ENCODE measurements at regions of chr11 and their contacts with region 1.

Region 1: DNA sequence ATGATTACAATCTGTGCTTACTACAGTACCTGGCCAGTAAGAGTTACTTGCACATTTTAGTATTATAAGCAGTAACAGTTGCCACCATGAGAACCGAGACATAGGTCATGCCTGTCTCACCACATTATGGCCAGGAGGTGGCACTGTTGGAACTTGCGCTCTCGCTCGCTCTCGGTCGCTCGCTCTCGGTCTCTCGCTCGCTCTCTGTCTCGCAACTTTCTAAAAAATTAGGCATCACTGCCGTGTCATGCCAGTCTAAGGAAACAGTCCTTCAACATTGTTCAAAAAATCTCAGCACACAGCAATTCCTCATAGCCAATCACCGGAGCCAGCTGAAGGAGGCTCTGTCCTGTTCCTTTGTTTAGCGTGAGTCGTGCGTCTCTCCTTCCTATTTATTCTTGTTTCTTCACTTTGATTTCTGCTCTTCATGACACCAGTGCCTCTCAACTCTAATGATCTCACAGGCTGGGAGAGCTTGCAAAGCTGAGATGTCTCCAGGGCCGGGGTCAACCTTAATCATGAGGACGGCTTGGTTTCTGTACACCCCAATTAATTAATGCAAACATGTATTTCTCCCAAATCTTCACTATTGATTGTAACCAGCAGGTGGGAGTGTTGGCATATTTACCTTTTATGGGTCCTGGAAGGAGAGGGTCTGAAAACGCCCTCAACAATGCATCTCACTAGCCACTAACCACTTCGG is 6.3 kb upstream of the ADAMTS8 start:
- H3K4me3 ChIP-seq: peak overlapping the region; percentile 38
- H3K27ac ChIP-seq: no peak overlapping the region
- H3K4me1 ChIP-seq: no peaks in the 10 kb centered on the region
- CTCF ChIP-seq: peak; percentile 76

Region 2: DNA sequence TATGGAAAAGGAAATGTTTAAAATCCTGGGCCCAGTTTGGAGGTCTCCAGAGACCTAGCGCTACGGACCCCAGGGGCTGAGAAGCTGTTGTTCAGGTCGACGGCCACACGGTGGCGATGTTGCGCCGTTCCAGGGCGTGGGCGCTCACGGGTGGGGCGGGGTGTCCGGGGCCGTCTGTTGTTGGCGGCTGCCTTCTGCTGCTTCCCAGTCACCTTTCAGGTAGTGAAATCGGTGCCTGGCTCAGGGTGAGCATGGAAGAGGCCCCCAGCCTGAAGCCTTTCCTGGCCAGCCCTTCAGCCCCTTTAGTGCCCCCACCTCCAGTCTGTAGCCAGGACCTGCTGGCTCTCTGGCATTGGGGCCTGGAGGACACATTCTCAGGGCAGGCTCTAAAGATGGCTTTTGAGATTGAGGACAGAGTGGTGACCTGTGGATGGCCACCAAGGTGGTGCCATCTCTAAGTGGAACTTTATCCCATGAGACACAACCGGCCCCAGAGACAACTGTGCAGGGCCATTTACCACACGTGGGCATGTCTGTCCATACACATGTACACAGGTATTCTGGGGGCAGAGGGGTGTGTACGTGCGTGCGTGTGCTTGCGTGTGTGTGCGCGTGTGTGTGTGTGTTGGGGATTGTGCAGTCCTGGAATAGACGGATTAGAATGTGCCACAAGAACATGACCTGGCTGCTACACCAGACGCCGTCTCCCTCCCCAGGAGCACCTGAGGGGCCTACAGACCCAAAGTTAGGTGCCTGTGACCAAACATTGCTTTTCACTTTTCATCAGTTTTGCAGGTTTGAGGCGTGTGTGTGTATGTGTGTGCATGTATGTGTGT is 221.3 kb before region 1 on chr11:
- CTCF ChIA-PET with region 1: interaction called, 68 read pairs
- POLR2A ChIA-PET with region 1: interaction called, 3 read pairs
- H3K4me3 ChIP-seq: no peak overlapping the region
- H3K27ac ChIP-seq: no peak overlapping the region
- H3K4me1 ChIP-seq: no peaks in the 10 kb centered on the region
- CTCF ChIP-seq: peak; percentile 67

Region 3: GRCh38 chr11:130390071-130390758 is 44.5 kb before region 1 on chr11:
- CTCF ChIA-PET with region 1: interaction called, 20 read pairs
- POLR2A ChIA-PET with region 1: no interaction called
- H3K4me3 ChIP-seq: no peak overlapping the region
- H3K27ac ChIP-seq: no peak overlapping the region
- H3K4me1 ChIP-seq: no peaks in the 10 kb centered on the region
- CTCF ChIP-seq: peak; percentile 28; the same call in 1 of the 2 replicates

Region 4: DNA sequence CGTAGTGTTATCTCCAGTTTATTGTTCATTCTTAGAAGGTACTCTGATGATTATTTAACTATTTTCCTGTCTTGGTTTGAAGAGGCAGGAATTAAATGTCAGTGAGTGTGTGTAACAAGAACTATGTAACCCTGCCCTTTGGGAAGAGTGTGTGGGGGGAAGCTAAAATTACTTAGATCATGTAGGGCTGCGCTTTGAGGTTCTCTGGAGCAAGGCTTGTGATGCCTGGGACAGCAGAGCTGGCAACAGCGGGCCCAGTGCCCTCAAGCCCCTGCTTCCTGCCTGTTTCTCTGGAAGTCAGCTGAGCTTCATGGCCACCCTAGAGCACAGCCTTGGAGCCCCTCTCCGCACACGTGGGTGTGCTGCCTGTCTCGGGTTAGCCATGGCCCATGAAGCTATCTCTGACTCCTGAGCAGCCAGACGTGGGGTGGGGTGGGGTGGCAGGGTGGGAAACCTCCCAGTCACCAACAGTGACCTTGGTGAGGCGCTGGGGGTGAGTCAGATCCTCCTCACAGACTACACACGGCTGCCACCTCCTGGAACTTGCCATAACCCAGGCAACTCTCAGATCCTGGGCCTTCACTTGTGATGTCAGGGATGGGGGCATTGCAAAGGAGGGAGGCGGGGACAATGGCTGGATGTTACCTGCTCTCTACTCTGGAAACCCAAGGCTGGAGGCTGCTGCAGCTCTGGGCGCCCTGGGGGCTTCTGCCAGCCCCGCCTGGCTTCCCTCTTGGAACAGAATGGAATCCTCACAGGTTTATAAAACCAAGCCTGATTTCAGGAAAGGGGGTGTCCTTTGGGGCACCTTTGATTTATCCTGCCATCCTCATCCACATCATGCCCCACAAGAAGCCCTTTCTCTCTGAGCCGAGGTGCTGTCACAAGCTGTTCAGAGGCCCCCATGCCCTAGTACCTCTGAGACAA is 393.0 kb after region 1 on chr11:
- CTCF ChIA-PET with region 1: interaction called, 29 read pairs
- POLR2A ChIA-PET with region 1: no interaction called
- H3K4me3 ChIP-seq: no peak overlapping the region
- H3K27ac ChIP-seq: no peak overlapping the region
- H3K4me1 ChIP-seq: no peaks in the 10 kb centered on the region
- CTCF ChIP-seq: peak; percentile 42; the same call in 1 of the 2 replicates

Region 5: DNA sequence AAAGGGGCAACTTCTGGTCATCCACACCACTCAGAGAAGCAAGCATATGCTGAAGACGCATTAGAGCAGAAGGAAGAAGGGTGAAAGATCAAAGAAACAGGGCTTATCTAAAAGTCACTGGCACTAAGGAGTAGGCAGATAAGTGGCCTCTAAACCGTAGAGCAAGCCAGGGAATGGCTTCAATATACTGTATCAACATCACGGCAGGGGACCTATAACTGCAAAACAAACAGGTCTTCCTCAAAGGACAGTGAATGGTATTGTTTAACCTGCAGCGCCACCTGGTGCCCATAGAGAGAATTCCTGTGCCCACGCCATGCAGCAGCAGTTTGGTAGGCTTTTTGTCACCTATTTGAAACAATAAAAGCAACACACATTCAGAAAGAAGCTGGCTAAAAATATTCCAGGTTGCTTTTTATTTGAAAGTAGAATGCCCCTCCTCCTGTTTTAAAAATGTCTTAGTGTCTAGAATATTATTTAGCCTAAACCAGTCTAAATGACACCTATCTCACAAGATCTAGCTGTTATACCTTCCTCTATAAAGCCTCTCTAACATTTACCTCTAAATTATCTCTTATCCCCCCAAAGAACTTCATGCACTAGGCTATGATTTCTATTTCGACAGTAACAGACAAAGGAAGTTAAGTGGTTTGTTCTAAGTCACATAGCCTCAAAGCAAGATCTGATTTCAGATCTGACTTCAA is 459.8 kb after region 1 on chr11:
- CTCF ChIA-PET with region 1: interaction called, 30 read pairs
- POLR2A ChIA-PET with region 1: interaction called, 8 read pairs
- H3K4me3 ChIP-seq: no peak overlapping the region
- H3K27ac ChIP-seq: no peak overlapping the region
- H3K4me1 ChIP-seq: 0 out of 2 replicates have a peak, but pooled peaks cover 2% of the 10 kb centered on the region
- CTCF ChIP-seq: 0 out of 2 replicates have a peak, but pooled peaks have one; percentile 48

Region 6: DNA sequence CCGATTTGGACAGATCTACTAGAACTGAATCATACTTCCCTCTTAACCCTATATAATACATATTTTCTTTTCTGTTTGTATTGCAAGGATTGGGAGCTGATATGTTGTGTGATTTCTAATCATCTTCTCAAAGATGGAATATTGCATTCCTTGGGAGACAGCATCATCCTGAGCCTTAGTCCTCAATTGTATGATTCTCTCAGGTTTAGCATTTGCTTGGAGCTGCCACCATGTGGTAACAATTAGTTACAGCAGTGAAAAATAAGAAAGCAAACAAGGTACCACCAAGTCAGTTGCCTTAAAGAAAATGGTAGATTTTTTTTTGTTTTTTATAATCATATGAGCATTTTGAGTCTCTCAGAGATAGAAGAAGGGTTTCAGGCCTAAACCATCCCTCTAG is 469.7 kb after region 1 on chr11:
- CTCF ChIA-PET with region 1: interaction called, 11 read pairs
- POLR2A ChIA-PET with region 1: no interaction called
- H3K4me3 ChIP-seq: no peak overlapping the region
- H3K27ac ChIP-seq: no peak overlapping the region
- H3K4me1 ChIP-seq: no peaks in the 10 kb centered on the region
- CTCF ChIP-seq: no peak